IMR-90 (cell line): ENCODE measurements at regions of chr10 and their contacts with region 1.

Region 1: DNA sequence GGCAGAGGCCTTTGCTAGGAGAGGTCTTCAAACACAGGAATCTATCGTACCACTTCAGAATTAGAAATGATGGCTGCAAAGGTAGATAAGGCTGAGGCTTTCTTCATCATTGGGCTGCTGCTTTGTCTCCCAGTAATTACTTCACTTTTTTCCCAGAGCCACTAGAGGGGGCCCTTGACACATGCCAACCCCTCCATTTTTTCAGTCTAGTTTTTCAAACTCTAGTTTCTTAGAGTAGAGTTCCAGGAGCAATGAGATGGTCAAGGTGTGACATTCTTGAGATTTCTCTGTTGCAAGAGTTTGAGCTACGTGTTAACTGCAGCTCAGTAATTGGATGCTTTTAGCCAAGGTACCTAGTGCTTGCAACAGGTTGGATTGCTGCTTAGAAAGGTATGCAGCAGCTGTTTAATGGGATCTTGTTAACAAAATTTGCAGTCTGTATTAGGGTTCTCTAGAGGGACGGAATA is 33.8 kb upstream of the RBM20 start:
- DNase-seq: peak; percentile 49
- ATAC-seq: peak; percentile 82
- H3K4me3 ChIP-seq: no peak overlapping the region
- H3K27ac ChIP-seq: no peak overlapping the region
- H3K4me1 ChIP-seq: peaks cover 6% of the 10 kb centered on the region
- H3K27me3 ChIP-seq: peaks cover 11% of the 10 kb centered on the region
- CTCF ChIP-seq: peak; percentile 91
- POLR2A ChIP-seq: no peak
- RAD21 ChIP-seq: peak; percentile 94

Region 2: DNA sequence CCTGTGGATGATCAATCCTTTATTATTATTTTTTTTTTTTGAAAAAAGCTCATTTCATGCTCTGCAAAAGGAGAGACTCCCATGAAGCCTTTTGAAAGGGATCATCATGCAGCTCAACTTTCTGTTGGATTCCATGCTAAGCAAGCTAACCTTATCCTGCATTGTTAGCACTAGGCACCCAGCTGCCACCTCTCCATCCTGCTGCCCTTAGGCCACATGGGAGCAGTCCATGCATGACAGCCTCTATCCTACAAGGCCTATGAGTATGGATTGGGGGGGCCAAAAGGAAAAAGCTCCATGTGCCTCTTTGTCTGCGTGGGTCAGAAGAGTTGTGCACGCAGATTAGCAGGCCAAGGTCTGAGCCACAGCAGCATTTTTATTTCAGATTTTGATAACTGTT is 324.8 kb before region 1 on chr10:
- CTCF ChIA-PET with region 1: no interaction called
- POLR2A ChIA-PET with region 1: interaction called, 15 read pairs
- dilution Hi-C with region 1: no loop called
- in situ Hi-C with region 1: no loop called
- intact Hi-C with region 1: no loop called
- DNase-seq: no peak
- ATAC-seq: no peak
- H3K4me3 ChIP-seq: no peak overlapping the region
- H3K27ac ChIP-seq: no peak overlapping the region
- H3K4me1 ChIP-seq: no peaks in the 10 kb centered on the region
- H3K27me3 ChIP-seq: no peaks in the 10 kb centered on the region
- CTCF ChIP-seq: no peak
- POLR2A ChIP-seq: no peak
- RAD21 ChIP-seq: no peak

Region 3: GRCh38 chr10:110681023-110681681 is 70.8 kb after region 1 on chr10:
- CTCF ChIA-PET with region 1: interaction called, 3 read pairs
- POLR2A ChIA-PET with region 1: no interaction called
- dilution Hi-C with region 1: no loop called
- in situ Hi-C with region 1: no loop called
- intact Hi-C with region 1: loop called (anchors 2 kb)
- DNase-seq: peak; percentile 31
- ATAC-seq: peak; percentile 49; the same call in 1 of the 2 replicates
- H3K4me3 ChIP-seq: no peak overlapping the region
- H3K27ac ChIP-seq: no peak overlapping the region
- H3K4me1 ChIP-seq: peaks cover 10% of the 10 kb centered on the region
- H3K27me3 ChIP-seq: peaks cover 2% of the 10 kb centered on the region; the same call in 1 of the 2 replicates
- CTCF ChIP-seq: peak; percentile 44
- POLR2A ChIP-seq: no peak
- RAD21 ChIP-seq: peak; percentile 46

Region 4: DNA sequence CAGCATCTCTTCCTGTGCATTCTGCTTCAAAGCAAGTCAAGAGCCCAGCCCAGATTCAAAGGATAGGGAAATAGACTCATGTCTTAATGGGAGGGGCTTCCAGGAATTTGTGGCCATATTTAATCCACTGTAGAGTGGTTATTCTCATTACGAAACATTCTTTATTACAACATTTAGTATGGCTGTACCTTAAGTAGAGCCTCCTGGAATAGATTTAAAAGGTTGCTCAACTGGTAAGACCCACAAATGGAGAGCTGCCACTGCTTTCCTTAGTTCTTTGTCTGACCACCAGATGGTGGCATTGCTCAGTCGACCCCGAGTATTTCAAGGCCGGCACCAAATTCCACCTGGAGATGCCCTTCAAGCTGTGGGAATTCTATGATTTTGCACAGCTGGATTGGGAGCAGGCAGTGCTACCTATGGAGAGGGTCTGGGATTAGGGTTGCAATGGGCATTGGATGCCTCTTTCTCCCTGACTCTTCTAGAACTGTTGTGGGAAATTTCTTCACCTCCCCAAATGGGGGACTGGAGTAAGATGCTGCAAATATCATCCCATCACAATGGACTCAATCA is 136.0 kb after region 1 on chr10:
- CTCF ChIA-PET with region 1: interaction called, 3 read pairs
- POLR2A ChIA-PET with region 1: no interaction called
- dilution Hi-C with region 1: no loop called
- in situ Hi-C with region 1: loop called (anchors 10 kb)
- intact Hi-C with region 1: loop called (anchors 2 kb)
- DNase-seq: peak; percentile 71
- ATAC-seq: peak; percentile 90
- H3K4me3 ChIP-seq: no peak overlapping the region
- H3K27ac ChIP-seq: no peak overlapping the region
- H3K4me1 ChIP-seq: no peaks in the 10 kb centered on the region; the same call in 1 of the 2 replicates
- H3K27me3 ChIP-seq: peaks cover 5% of the 10 kb centered on the region
- CTCF ChIP-seq: peak; percentile 81
- POLR2A ChIP-seq: 0 out of 2 replicates have a peak, but pooled peaks have one; percentile 30
- RAD21 ChIP-seq: peak; percentile 90

Region 5: GRCh38 chr10:110783509-110784107 is 173.3 kb after region 1 on chr10:
- CTCF ChIA-PET with region 1: no interaction called
- POLR2A ChIA-PET with region 1: no interaction called
- dilution Hi-C with region 1: no loop called
- in situ Hi-C with region 1: no loop called
- intact Hi-C with region 1: no loop called
- DNase-seq: peak; percentile 4
- ATAC-seq: no peak
- H3K4me3 ChIP-seq: no peak overlapping the region
- H3K27ac ChIP-seq: no peak overlapping the region
- H3K4me1 ChIP-seq: peaks cover 3% of the 10 kb centered on the region; the same call in 1 of the 2 replicates
- H3K27me3 ChIP-seq: peaks cover 11% of the 10 kb centered on the region
- CTCF ChIP-seq: no peak
- POLR2A ChIP-seq: no peak
- RAD21 ChIP-seq: no peak

Region 6: GRCh38 chr10:110893559-110894179 is 283.3 kb after region 1 on chr10:
- CTCF ChIA-PET with region 1: no interaction called
- POLR2A ChIA-PET with region 1: no interaction called
- dilution Hi-C with region 1: no loop called
- in situ Hi-C with region 1: loop called (anchors 5 kb)
- intact Hi-C with region 1: loop called (anchors 1 kb)
- DNase-seq: peak; percentile 46
- ATAC-seq: peak; percentile 72
- H3K4me3 ChIP-seq: no peak overlapping the region
- H3K27ac ChIP-seq: no peak overlapping the region
- H3K4me1 ChIP-seq: peaks cover 6% of the 10 kb centered on the region
- H3K27me3 ChIP-seq: no peaks in the 10 kb centered on the region
- CTCF ChIP-seq: peak; percentile 52
- POLR2A ChIP-seq: no peak
- RAD21 ChIP-seq: peak; percentile 48

Region 7: GRCh38 chr10:112140110-112140970 is 1530.0 kb after region 1 on chr10:
- CTCF ChIA-PET with region 1: interaction called, 3 read pairs
- POLR2A ChIA-PET with region 1: no interaction called
- dilution Hi-C with region 1: no loop called
- in situ Hi-C with region 1: loop called (anchors 10 kb)
- intact Hi-C with region 1: loop called (anchors 1 kb)
- DNase-seq: peak; percentile 59
- ATAC-seq: peak; percentile 96
- H3K4me3 ChIP-seq: no peak overlapping the region
- H3K27ac ChIP-seq: no peak overlapping the region
- H3K4me1 ChIP-seq: no peaks in the 10 kb centered on the region
- H3K27me3 ChIP-seq: no peaks in the 10 kb centered on the region; the same call in 1 of the 2 replicates
- CTCF ChIP-seq: peak; percentile 83
- POLR2A ChIP-seq: no peak
- RAD21 ChIP-seq: peak; percentile 69